OCI-LY7 (cell line): ENCODE measurements at regions of chr2 and their contacts with region 1.

Region 1: DNA sequence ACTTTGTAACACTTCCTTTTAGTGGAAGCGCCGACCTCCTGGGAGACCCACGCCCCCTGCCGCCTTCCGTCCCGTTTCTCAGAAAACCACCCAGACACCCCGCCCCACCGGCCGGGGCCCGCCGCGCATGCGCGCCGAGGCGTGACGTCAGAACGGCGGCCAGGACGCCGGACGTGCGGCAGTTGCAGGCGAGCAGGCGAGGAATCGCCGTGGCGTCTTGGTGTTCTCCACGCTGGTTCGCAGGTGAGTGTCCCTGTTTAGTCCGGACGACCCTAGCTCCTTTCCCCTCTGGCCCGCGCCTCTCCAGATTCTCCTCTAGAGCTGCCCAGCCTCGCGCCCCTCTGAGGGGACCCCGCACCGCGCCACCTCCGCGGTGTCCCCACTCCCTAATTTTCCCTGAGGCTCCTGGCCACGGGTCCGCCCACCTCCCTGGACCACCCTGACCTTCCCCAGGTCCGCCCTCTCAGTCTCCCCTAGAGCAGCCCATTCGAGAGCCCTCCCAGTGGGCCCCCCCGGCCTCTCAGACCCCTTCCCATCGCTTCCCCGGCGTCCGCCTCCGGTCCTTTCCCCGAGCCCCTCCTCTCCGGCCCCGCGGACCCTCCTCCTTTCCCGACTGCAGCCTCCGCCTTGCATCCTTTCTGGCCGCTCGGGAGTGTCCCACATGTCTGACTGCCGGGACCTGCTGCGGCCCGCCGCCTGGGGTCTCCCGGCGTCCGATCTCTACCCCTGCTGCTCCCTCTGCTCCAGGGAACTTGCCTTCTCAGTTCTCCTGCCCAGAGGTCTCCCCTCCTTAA is at the start of gene PLEKHB2:
- DNase-seq: peak; percentile 92
- H3K4me3 ChIP-seq: peak within 1 kb of the TSS; percentile 97
- H3K27ac ChIP-seq: peak within 1 kb of the TSS; percentile 80
- H3K4me1 ChIP-seq: peaks cover 21% of the 10 kb centered on the region
- CTCF ChIP-seq: 0 out of 2 replicates have a peak, but pooled peaks have one; percentile 51
- total RNA-seq, gene PLEKHB2: 23.4 and 28.3 TPM in 2 replicates

Region 2: GRCh38 chr2:130884503-130884902 is 220.8 kb before region 1 on chr2:
- CTCF ChIA-PET with region 1: no interaction called
- POLR2A ChIA-PET with region 1: no interaction called
- intact Hi-C with region 1: no loop called
- DNase-seq: no peak
- H3K4me3 ChIP-seq: no peak overlapping the region
- H3K27ac ChIP-seq: no peak overlapping the region
- H3K4me1 ChIP-seq: no peaks in the 10 kb centered on the region
- CTCF ChIP-seq: no peak

Region 3: GRCh38 chr2:131093006-131093695 is 12.2 kb before region 1 on chr2 and contains the start of gene FAM168B:
- CTCF ChIA-PET with region 1: interaction called, 3 read pairs
- POLR2A ChIA-PET with region 1: interaction called, 18 read pairs
- intact Hi-C with region 1: loop called (anchors 1 kb)
- DNase-seq: peak; percentile 92
- H3K4me3 ChIP-seq: peak within 1 kb of the TSS; percentile 97
- H3K27ac ChIP-seq: peak within 1 kb of the TSS; percentile 63
- H3K4me1 ChIP-seq: peaks cover 7% of the 10 kb centered on the region
- CTCF ChIP-seq: no peak
- total RNA-seq, gene FAM168B: 53.5 and 53.6 TPM in 2 replicates

Region 4: GRCh38 chr2:131145040-131145439 is 39.7 kb after region 1 on chr2:
- CTCF ChIA-PET with region 1: no interaction called
- POLR2A ChIA-PET with region 1: interaction called, 5 read pairs
- intact Hi-C with region 1: loop called (anchors 2 kb)
- DNase-seq: peak; percentile 79
- H3K4me3 ChIP-seq: peak overlapping the region; percentile 25
- H3K27ac ChIP-seq: peak overlapping the region; percentile 89
- H3K4me1 ChIP-seq: peaks cover 44% of the 10 kb centered on the region
- CTCF ChIP-seq: no peak